MCF 10A (cell line): ENCODE measurements at regions of chr7 and their contacts with region 1.

Region 1: GRCh38 chr7:29921404-29922010 is 68.1 kb downstream of the SCRN1 start:
- DNase-seq: peak; percentile 75
- H3K4me3 Mint-ChIP-seq: no peak overlapping the region
- H3K27ac Mint-ChIP-seq: no peak overlapping the region
- H3K4me1 Mint-ChIP-seq: peaks cover 3% of the 10 kb centered on the region
- H3K27me3 Mint-ChIP-seq: peaks cover 28% of the 10 kb centered on the region
- CTCF ChIP-seq: peak; percentile 82

Region 2: DNA sequence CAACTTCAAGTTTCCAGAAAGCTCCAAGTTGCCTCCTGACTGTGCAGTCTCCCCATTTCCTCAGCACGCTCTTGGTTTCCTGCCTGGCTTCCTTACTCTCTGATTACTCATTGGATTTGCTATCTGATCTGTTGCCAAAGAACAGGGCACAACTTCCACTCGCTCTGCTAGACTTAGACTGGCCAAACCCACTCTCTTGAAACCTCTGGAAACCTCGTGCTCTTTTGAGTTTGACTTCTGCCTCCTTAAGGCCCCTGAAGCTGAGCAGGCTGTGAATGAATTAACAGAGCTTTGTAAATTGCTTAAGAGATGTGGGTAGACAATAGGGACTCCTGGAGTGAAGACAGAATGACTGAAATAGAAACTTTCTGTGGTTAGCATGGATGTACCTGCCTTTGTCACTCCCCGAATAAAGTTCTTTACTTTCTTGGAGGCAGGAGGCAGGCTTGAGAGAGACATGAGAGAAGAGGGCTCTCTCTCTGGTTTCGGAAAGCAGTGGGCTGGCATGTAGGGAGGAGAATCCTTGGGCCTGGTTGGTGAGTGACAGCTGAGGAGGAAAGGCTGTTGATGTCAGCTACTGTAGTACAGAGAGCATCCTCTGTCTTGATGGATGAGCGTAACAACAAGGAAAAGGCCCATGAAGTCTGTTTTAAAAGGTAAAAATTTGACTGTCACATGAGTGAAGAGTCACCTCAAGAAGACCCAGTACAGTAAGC is 656.1 kb before region 1 on chr7:
- CTCF ChIA-PET with region 1: no interaction called
- POLR2A ChIA-PET with region 1: no interaction called
- intact Hi-C with region 1: no loop called
- DNase-seq: peak; percentile 77
- H3K4me3 Mint-ChIP-seq: no peak overlapping the region
- H3K27ac Mint-ChIP-seq: peak overlapping the region; percentile 1
- H3K4me1 Mint-ChIP-seq: peaks cover 15% of the 10 kb centered on the region
- H3K27me3 Mint-ChIP-seq: no peaks in the 10 kb centered on the region
- CTCF ChIP-seq: no peak

Region 3: GRCh38 chr7:29639881-29640595 is 281.5 kb before region 1 on chr7:
- CTCF ChIA-PET with region 1: interaction called, 53 read pairs
- POLR2A ChIA-PET with region 1: interaction called, 5 read pairs
- intact Hi-C with region 1: loop called (anchors 1 kb)
- DNase-seq: no peak
- H3K4me3 Mint-ChIP-seq: no peak overlapping the region
- H3K27ac Mint-ChIP-seq: no peak overlapping the region
- H3K4me1 Mint-ChIP-seq: peaks cover 5% of the 10 kb centered on the region
- H3K27me3 Mint-ChIP-seq: no peaks in the 10 kb centered on the region
- CTCF ChIP-seq: no peak

Region 4: DNA sequence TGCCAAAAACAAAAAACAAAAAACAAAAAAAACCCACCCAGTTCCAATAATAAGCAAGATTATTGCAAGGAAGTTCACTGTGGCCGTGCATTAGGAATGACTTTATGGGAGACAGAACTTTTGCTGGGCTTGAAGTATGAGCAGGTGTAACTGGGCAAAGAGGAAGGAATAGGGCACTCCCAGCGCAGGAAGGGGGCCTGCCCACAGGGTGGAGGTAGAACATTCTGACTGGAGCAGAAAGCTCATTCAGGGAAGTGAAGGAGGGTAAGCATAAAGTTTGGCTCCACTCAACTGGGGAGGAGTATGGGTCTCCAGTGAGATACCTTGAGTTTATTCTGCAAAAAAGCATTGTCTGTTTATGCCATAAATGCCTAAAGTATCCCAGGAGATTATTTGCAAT is 157.3 kb before region 1 on chr7:
- CTCF ChIA-PET with region 1: interaction called, 9 read pairs
- POLR2A ChIA-PET with region 1: no interaction called
- intact Hi-C with region 1: loop called (anchors 5 kb)
- DNase-seq: peak; percentile 13
- H3K4me3 Mint-ChIP-seq: no peak overlapping the region
- H3K27ac Mint-ChIP-seq: no peak overlapping the region
- H3K4me1 Mint-ChIP-seq: no peaks in the 10 kb centered on the region
- H3K27me3 Mint-ChIP-seq: peaks cover 38% of the 10 kb centered on the region
- CTCF ChIP-seq: no peak

Region 5: DNA sequence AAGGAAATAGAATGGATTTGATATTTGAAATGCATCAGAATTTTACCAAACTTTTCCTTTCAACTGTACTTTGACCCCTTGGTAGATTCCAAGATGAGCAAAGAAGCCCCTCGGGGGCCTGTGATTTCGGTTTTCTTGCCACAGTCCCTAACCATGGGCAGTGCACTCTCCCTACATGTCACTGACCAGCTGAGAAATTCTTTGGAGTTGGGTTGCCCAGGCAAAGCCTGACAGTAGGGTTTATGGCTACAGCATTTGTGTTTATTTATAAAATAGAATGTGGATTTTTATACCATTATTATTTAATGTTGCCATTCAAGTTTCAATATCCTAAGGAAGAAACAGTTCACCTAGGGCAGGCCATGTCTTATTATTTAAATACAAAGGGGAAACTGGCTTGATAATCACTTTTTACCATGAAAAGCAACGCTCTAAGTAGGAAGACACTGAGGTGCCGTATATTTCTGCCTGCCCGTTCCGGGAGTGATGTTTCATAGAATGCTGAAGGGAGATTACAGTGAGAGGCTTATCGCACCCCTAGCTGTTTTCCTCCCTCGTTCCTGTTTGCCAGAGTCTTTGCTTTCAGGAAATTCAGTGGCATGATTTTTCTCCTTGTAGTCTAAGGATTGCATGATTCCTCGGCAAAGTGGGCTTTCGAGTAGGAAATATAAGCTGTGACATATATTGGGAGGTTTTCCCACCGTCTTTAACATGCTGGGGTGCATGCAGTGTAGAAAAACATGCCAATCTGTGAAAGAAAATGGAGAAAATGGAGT is 79.4 kb before region 1 on chr7:
- CTCF ChIA-PET with region 1: no interaction called
- POLR2A ChIA-PET with region 1: no interaction called
- intact Hi-C with region 1: no loop called
- DNase-seq: no peak
- H3K4me3 Mint-ChIP-seq: no peak overlapping the region
- H3K27ac Mint-ChIP-seq: no peak overlapping the region
- H3K4me1 Mint-ChIP-seq: no peaks in the 10 kb centered on the region
- H3K27me3 Mint-ChIP-seq: peaks cover 73% of the 10 kb centered on the region
- CTCF ChIP-seq: no peak

Region 6: DNA sequence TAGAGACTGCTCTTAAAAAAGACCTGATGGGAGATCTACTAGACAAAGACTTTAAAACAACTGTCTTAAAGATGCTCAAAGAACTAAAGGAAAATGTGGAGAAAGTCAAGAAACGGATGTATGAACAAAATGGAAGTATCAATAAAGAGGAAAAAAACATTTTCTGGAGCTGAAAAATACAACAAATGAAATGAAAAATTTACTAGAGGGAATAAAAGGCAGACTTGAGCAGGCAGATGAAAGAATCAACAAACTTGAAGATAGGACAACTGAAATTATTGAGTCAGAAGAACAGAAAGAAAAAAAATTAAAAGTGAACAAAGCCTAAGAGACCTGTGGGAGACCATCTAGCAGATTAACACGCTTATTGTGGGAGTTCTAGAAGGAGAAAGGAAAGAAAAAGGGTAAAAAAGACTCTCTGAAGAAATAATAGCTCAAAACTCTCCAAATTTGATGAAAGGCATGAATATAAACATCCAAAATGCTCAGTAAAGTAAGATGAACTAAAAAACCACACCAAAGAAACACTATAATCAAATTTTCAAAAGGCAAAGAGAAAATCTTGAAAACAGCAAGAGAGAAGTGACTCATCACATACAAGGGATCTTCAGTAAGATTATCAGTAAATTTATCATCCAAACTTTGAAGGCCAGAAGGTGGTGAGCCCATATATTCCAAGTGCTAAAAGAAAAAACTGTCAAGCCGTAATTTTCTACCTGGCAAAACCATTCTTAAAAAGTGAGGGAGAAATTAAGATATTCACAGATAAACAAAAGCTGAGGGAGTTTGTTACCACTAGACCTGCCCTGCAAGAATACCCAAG is 15.1 kb before region 1 on chr7:
- CTCF ChIA-PET with region 1: interaction called, 22 read pairs
- POLR2A ChIA-PET with region 1: no interaction called
- intact Hi-C with region 1: no loop called
- DNase-seq: no peak
- H3K4me3 Mint-ChIP-seq: no peak overlapping the region
- H3K27ac Mint-ChIP-seq: no peak overlapping the region
- H3K4me1 Mint-ChIP-seq: no peaks in the 10 kb centered on the region
- H3K27me3 Mint-ChIP-seq: peaks cover 41% of the 10 kb centered on the region
- CTCF ChIP-seq: no peak

Region 7: GRCh38 chr7:29998489-29998888 is 77.0 kb after region 1 on chr7:
- CTCF ChIA-PET with region 1: no interaction called
- POLR2A ChIA-PET with region 1: no interaction called
- intact Hi-C with region 1: no loop called
- DNase-seq: no peak
- H3K4me3 Mint-ChIP-seq: no peak overlapping the region
- H3K27ac Mint-ChIP-seq: no peak overlapping the region
- H3K4me1 Mint-ChIP-seq: no peaks in the 10 kb centered on the region
- H3K27me3 Mint-ChIP-seq: no peaks in the 10 kb centered on the region
- CTCF ChIP-seq: no peak

Region 8: GRCh38 chr7:30062591-30062990 is 141.1 kb after region 1 on chr7:
- CTCF ChIA-PET with region 1: interaction called, 6 read pairs
- POLR2A ChIA-PET with region 1: no interaction called
- intact Hi-C with region 1: loop called (anchors 1 kb)
- DNase-seq: peak; percentile 57
- H3K4me3 Mint-ChIP-seq: no peak overlapping the region
- H3K27ac Mint-ChIP-seq: no peak overlapping the region
- H3K4me1 Mint-ChIP-seq: no peaks in the 10 kb centered on the region
- H3K27me3 Mint-ChIP-seq: no peaks in the 10 kb centered on the region
- CTCF ChIP-seq: peak; percentile 49